Naive thymus-derived CD4-positive, alpha-beta T cell (primary cell): ENCODE measurements at regions of chr14 and their contacts with region 1.

Region 1: GRCh38 chr14:98138666-98139065 is 1133.3 kb downstream of the BCL11B start:
- DNase-seq: peak; percentile 35 to 87 (median 81)
- ATAC-seq: peak; percentile 75
- H3K4me3 ChIP-seq: peak overlapping the region; percentile 52
- H3K4me3 Mint-ChIP-seq: peak overlapping the region; percentile 75 to 99 (median 93)
- H3K27ac ChIP-seq: peak overlapping the region; percentile 78
- H3K27ac Mint-ChIP-seq: peak overlapping the region; percentile 90 to 99 (median 96)
- H3K4me1 ChIP-seq: peaks cover 70 to 76% of the 10 kb centered on the region in 2 donors
- H3K4me1 Mint-ChIP-seq: peaks cover 66 to 100% (median 96%) of the 10 kb centered on the region in 7 donors
- H3K27me3 ChIP-seq: no peaks in the 10 kb centered on the region
- H3K27me3 Mint-ChIP-seq: no peaks in the 10 kb centered on the region

Region 2: GRCh38 chr14:97185186-97185585 is 953.5 kb before region 1 on chr14:
- CTCF ChIA-PET with region 1: interaction called, 4 read pairs
- POLR2A ChIA-PET with region 1: interaction called, 3 read pairs
- intact Hi-C with region 1: loop called in 1 of 2 experiments (anchors 2 kb)
- DNase-seq: peak in 6 of 9 donors; percentile 1 to 36 (median 30)
- ATAC-seq: peak; percentile 57
- H3K4me3 ChIP-seq: no peak overlapping the region
- H3K4me3 Mint-ChIP-seq: no peak overlapping the region
- H3K27ac ChIP-seq: no peak overlapping the region
- H3K27ac Mint-ChIP-seq: peak overlapping the region in 4 of 9 donors; percentile 7 to 53 (median 41)
- H3K4me1 ChIP-seq: no peaks in the 10 kb centered on the region
- H3K4me1 Mint-ChIP-seq: peaks cover 0 to 22% (median 6%) of the 10 kb centered on the region in 7 donors
- H3K27me3 ChIP-seq: no peaks in the 10 kb centered on the region
- H3K27me3 Mint-ChIP-seq: peaks cover 0 to 22% (median 0%) of the 10 kb centered on the region in 5 donors

Region 3: GRCh38 chr14:97771340-97772045 is 367.2 kb before region 1 on chr14:
- CTCF ChIA-PET with region 1: no interaction called
- POLR2A ChIA-PET with region 1: no interaction called
- intact Hi-C with region 1: loop called in 1 of 2 experiments (anchors 10 kb)
- DNase-seq: no peak
- ATAC-seq: no peak
- H3K4me3 ChIP-seq: no peak overlapping the region
- H3K4me3 Mint-ChIP-seq: no peak overlapping the region
- H3K27ac ChIP-seq: no peak overlapping the region
- H3K27ac Mint-ChIP-seq: no peak overlapping the region
- H3K4me1 ChIP-seq: no peaks in the 10 kb centered on the region
- H3K4me1 Mint-ChIP-seq: peaks cover 0 to 8% (median 3%) of the 10 kb centered on the region in 7 donors
- H3K27me3 ChIP-seq: no peaks in the 10 kb centered on the region
- H3K27me3 Mint-ChIP-seq: no peaks in the 10 kb centered on the region

Region 4: GRCh38 chr14:98120831-98121464 is 17.7 kb before region 1 on chr14:
- CTCF ChIA-PET with region 1: no interaction called
- POLR2A ChIA-PET with region 1: no interaction called
- intact Hi-C with region 1: no loop called
- DNase-seq: no peak
- ATAC-seq: no peak
- H3K4me3 ChIP-seq: no peak overlapping the region
- H3K4me3 Mint-ChIP-seq: no peak overlapping the region
- H3K27ac ChIP-seq: no peak overlapping the region
- H3K27ac Mint-ChIP-seq: no peak overlapping the region
- H3K4me1 ChIP-seq: peaks cover 0 to 4% of the 10 kb centered on the region in 2 donors
- H3K4me1 Mint-ChIP-seq: peaks cover 0 to 11% (median 7%) of the 10 kb centered on the region in 7 donors
- H3K27me3 ChIP-seq: no peaks in the 10 kb centered on the region
- H3K27me3 Mint-ChIP-seq: no peaks in the 10 kb centered on the region

Region 5: DNA sequence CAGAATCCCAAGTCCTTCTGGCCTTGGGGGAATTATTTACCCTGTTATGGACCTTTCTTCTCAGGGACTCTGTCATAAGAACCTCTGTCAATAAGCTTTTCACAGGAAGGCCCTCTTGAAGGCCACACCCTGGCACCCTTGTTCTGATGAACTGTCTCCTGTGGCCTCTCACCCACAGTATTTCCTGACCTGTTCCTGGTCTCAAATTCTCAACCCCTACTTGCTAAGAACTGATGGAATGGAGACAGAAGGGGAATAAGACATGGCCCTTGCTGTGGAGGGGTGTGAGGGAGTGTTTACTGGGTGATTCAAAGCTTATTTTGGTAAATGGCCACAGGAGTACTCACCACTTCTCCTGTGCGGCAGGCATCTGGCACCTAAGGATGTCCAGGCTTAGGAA is 50.4 kb after region 1 on chr14:
- CTCF ChIA-PET with region 1: interaction called, 279 read pairs
- POLR2A ChIA-PET with region 1: interaction called, 501 read pairs
- intact Hi-C with region 1: loop called (anchors 1 kb)
- DNase-seq: peak in 1 of 9 donors; percentile 50
- ATAC-seq: peak; percentile 40
- H3K4me3 ChIP-seq: peak overlapping the region; percentile 48
- H3K4me3 Mint-ChIP-seq: peak overlapping the region; percentile 63 to 86 (median 76)
- H3K27ac ChIP-seq: peak overlapping the region; percentile 80
- H3K27ac Mint-ChIP-seq: peak overlapping the region; percentile 92 to 100 (median 98)
- H3K4me1 ChIP-seq: peaks cover 82 to 95% of the 10 kb centered on the region in 2 donors
- H3K4me1 Mint-ChIP-seq: peaks cover 56 to 100% (median 98%) of the 10 kb centered on the region in 7 donors
- H3K27me3 ChIP-seq: no peaks in the 10 kb centered on the region
- H3K27me3 Mint-ChIP-seq: no peaks in the 10 kb centered on the region

Region 6: DNA sequence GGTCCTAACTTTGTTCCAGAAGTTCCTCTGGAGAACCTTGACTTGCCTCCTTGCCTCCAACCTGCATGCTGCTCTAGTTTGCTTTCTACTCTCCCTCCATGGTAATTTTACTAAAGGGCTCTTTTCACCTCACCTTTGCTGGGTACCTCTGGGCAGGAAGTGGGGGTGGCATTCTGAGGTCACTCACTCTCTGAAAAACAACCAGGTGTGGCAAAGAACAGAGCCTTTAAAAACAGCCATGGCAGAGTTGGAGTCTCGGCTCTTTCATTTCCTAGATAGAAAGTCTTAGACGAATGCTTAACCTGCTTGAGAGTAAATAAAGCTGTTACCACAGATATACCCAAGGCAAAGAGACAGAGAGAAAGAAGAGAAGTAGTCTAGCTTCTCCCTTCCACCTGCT is 305.4 kb after region 1 on chr14:
- CTCF ChIA-PET with region 1: interaction called, 4 read pairs
- POLR2A ChIA-PET with region 1: interaction called, 7 read pairs
- intact Hi-C with region 1: loop called in 1 of 2 experiments (anchors 2 kb)
- DNase-seq: peak in 7 of 9 donors; percentile 61 to 90 (median 86)
- ATAC-seq: peak; percentile 97
- H3K4me3 ChIP-seq: peak overlapping the region; percentile 26
- H3K4me3 Mint-ChIP-seq: peak overlapping the region; percentile 15 to 93 (median 81)
- H3K27ac ChIP-seq: peak overlapping the region; percentile 63
- H3K27ac Mint-ChIP-seq: peak overlapping the region in 6 of 9 donors; percentile 70 to 100 (median 100)
- H3K4me1 ChIP-seq: peaks cover 17 to 43% of the 10 kb centered on the region in 2 donors
- H3K4me1 Mint-ChIP-seq: peaks cover 0 to 54% (median 32%) of the 10 kb centered on the region in 7 donors
- H3K27me3 ChIP-seq: no peaks in the 10 kb centered on the region
- H3K27me3 Mint-ChIP-seq: no peaks in the 10 kb centered on the region

Region 7: DNA sequence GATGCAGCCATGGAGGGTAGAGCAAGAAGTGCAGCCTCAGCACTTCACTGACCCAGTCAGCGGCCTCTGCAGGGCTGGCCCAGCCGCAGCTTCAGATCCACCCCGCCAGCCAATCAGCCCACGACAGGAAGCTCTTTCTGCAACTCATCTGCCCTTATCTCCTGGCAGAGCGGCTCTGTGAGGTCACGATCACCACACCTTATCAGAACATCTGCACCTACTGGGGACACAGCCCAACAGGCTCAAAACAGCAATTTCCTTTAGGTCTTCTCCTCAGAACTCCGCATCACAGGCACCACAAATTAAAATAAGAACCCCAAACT is 846.0 kb after region 1 on chr14:
- CTCF ChIA-PET with region 1: no interaction called
- POLR2A ChIA-PET with region 1: no interaction called
- intact Hi-C with region 1: loop called in 1 of 2 experiments (anchors 5 kb)
- DNase-seq: peak; percentile 27 to 76 (median 67)
- ATAC-seq: peak; percentile 96
- H3K4me3 ChIP-seq: peak overlapping the region; percentile 17
- H3K4me3 Mint-ChIP-seq: peak overlapping the region; percentile 51 to 86 (median 78)
- H3K27ac ChIP-seq: peak overlapping the region; percentile 56
- H3K27ac Mint-ChIP-seq: peak overlapping the region; percentile 74 to 97 (median 94)
- H3K4me1 ChIP-seq: peaks cover 29 to 32% of the 10 kb centered on the region in 2 donors
- H3K4me1 Mint-ChIP-seq: peaks cover 27 to 65% (median 48%) of the 10 kb centered on the region in 7 donors
- H3K27me3 ChIP-seq: no peaks in the 10 kb centered on the region
- H3K27me3 Mint-ChIP-seq: no peaks in the 10 kb centered on the region